Naive thymus-derived CD4-positive, alpha-beta T cell (primary cell): ENCODE measurements at regions of chrX and their contacts with region 1.

Region 1: GRCh38 chrX:13029341-13029740 is 15.1 kb downstream of the FAM9C start:
- DNase-seq: peak in 2 of 9 donors; percentile 13 to 23
- ATAC-seq: peak; percentile 44
- H3K4me3 ChIP-seq: no peak overlapping the region
- H3K4me3 Mint-ChIP-seq: peak overlapping the region; percentile 20 to 78 (median 62)
- H3K27ac ChIP-seq: peak overlapping the region; percentile 71
- H3K27ac Mint-ChIP-seq: peak overlapping the region; percentile 81 to 98 (median 93)
- H3K4me1 ChIP-seq: peaks cover 51 to 52% of the 10 kb centered on the region in 2 donors
- H3K4me1 Mint-ChIP-seq: peaks cover 33 to 88% (median 72%) of the 10 kb centered on the region in 7 donors
- H3K27me3 ChIP-seq: no peaks in the 10 kb centered on the region
- H3K27me3 Mint-ChIP-seq: no peaks in the 10 kb centered on the region

Region 2: GRCh38 chrX:12984629-12985319 is 44.6 kb before region 1 on chrX:
- CTCF ChIA-PET with region 1: interaction called, 6 read pairs
- POLR2A ChIA-PET with region 1: interaction called, 213 read pairs
- intact Hi-C with region 1: no loop called
- DNase-seq: peak in 8 of 9 donors; percentile 53 to 73 (median 69)
- ATAC-seq: peak; percentile 84
- H3K4me3 ChIP-seq: peak overlapping the region; percentile 21
- H3K4me3 Mint-ChIP-seq: peak overlapping the region; percentile 61 to 82 (median 75)
- H3K27ac ChIP-seq: peak overlapping the region; percentile 67
- H3K27ac Mint-ChIP-seq: peak overlapping the region; percentile 92 to 99 (median 97)
- H3K4me1 ChIP-seq: peaks cover 64 to 67% of the 10 kb centered on the region in 2 donors
- H3K4me1 Mint-ChIP-seq: peaks cover 28 to 90% (median 68%) of the 10 kb centered on the region in 7 donors
- H3K27me3 ChIP-seq: no peaks in the 10 kb centered on the region
- H3K27me3 Mint-ChIP-seq: no peaks in the 10 kb centered on the region

Region 3: GRCh38 chrX:13005661-13006473 is 23.5 kb before region 1 on chrX:
- CTCF ChIA-PET with region 1: interaction called, 5 read pairs
- POLR2A ChIA-PET with region 1: interaction called, 33 read pairs
- intact Hi-C with region 1: loop called in 1 of 2 experiments (anchors 2 kb)
- DNase-seq: peak in 4 of 9 donors; percentile 17 to 39 (median 30)
- ATAC-seq: peak; percentile 61
- H3K4me3 ChIP-seq: no peak overlapping the region
- H3K4me3 Mint-ChIP-seq: peak overlapping the region; percentile 61 to 88 (median 72)
- H3K27ac ChIP-seq: peak overlapping the region; percentile 58
- H3K27ac Mint-ChIP-seq: peak overlapping the region; percentile 86 to 100 (median 95)
- H3K4me1 ChIP-seq: peaks cover 37 to 61% of the 10 kb centered on the region in 2 donors
- H3K4me1 Mint-ChIP-seq: peaks cover 33 to 83% (median 55%) of the 10 kb centered on the region in 7 donors
- H3K27me3 ChIP-seq: no peaks in the 10 kb centered on the region
- H3K27me3 Mint-ChIP-seq: no peaks in the 10 kb centered on the region

Region 4: DNA sequence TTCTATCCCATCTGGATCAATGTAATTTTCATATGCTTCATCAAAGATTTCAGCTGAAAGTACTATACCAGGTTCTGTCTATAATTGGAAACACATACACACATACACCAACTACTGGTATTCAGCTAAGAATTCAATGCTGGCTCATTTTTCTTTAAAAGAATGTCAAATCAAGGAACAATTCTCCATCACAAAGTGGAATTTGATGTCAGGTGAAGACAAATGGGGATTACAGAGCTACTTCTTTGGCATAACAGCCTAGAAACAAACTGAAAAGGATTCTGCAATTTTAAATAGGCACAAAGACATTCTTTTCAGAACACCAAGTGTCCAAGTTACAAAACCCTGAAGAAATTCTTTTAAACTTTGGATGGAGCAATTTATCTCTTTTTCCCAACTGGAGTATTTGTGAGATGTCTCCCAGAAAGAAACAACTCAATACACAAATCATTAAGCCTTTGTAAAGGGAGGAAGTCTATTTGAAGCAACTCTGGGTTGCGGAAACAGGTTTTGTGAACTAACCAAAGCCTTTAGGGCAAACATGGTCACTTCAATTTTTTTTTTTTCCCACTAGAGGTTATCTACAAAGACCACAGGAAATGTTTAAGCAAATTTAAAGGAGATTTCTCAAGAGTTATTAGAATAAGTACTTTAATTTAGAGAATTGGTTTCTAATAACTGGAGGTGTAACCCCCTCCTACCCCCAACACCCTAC is 17.0 kb after region 1 on chrX:
- CTCF ChIA-PET with region 1: interaction called, 18 read pairs
- POLR2A ChIA-PET with region 1: interaction called, 215 read pairs
- intact Hi-C with region 1: loop called (anchors 1 to 2 kb)
- DNase-seq: no peak
- ATAC-seq: no peak
- H3K4me3 ChIP-seq: no peak overlapping the region
- H3K4me3 Mint-ChIP-seq: peak overlapping the region in 5 of 10 donors; percentile 3 to 58 (median 23)
- H3K27ac ChIP-seq: no peak overlapping the region
- H3K27ac Mint-ChIP-seq: peak overlapping the region in 8 of 9 donors; percentile 20 to 89 (median 60)
- H3K4me1 ChIP-seq: peaks cover 20 to 60% of the 10 kb centered on the region in 2 donors
- H3K4me1 Mint-ChIP-seq: peaks cover 6 to 71% (median 61%) of the 10 kb centered on the region in 7 donors
- H3K27me3 ChIP-seq: no peaks in the 10 kb centered on the region
- H3K27me3 Mint-ChIP-seq: no peaks in the 10 kb centered on the region

Region 5: GRCh38 chrX:13078739-13079444 is 49.6 kb after region 1 on chrX:
- CTCF ChIA-PET with region 1: no interaction called
- POLR2A ChIA-PET with region 1: interaction called, 269 read pairs
- intact Hi-C with region 1: loop called in 1 of 2 experiments (anchors 5 kb)
- DNase-seq: no peak
- ATAC-seq: no peak
- H3K4me3 ChIP-seq: peak overlapping the region; percentile 54
- H3K4me3 Mint-ChIP-seq: peak overlapping the region; percentile 59 to 79 (median 74)
- H3K27ac ChIP-seq: peak overlapping the region; percentile 88
- H3K27ac Mint-ChIP-seq: peak overlapping the region; percentile 90 to 99 (median 95)
- H3K4me1 ChIP-seq: peaks cover 55 to 92% of the 10 kb centered on the region in 2 donors
- H3K4me1 Mint-ChIP-seq: peaks cover 42 to 98% (median 89%) of the 10 kb centered on the region in 7 donors
- H3K27me3 ChIP-seq: no peaks in the 10 kb centered on the region
- H3K27me3 Mint-ChIP-seq: no peaks in the 10 kb centered on the region